GM12878 (cell line): ENCODE measurements at regions of chr7 and their contacts with region 1.

Region 1: DNA sequence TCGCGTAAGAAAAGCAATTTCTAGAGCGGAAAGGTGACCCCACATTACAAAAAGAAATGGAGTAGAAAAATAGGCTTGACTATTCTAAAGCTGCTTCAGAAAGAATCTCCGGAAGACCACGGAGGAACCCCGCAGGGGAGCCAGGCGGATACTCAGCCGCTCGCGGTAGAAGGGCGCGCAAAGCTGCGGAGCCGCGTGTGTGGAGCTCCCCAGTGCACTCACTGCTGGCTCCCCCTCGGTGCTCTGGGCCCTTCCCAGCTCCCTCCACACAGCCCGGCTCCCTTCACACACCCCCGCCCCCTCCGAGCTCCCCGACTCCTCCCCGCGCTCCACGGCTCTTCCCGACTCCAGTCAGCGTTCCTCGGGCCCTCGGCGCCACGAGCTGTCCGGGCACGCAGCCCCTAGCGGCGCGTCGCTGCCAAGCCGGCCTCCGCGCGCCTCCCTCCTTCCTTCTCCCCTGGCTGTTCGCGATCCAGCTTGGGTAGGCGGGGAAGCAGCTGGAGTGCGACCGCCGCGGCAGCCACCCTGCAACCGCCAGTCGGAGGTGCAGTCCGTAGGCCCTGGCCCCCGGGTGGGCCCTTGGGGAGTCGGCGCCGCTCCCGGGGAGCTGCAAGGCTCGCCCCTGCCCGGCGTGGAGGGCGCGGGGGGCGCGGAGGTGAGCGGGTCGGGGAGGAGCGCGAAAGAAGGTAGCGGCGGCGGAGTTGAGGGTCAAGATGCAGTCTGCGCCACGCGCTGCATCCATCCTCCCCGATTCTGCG is at the start of gene STEAP2:
- DNase-seq: no peak
- ATAC-seq: peak; percentile 91
- H3K4me3 ChIP-seq: no peak within 1 kb of the TSS
- H3K27ac ChIP-seq: no peak within 1 kb of the TSS
- H3K4me1 ChIP-seq: no peaks in the 10 kb centered on the region
- H3K27me3 ChIP-seq: peaks cover 1 to 17% of the 10 kb centered on the region in 2 experiments
- CTCF ChIP-seq: peak; percentile 32 to 61 (median 44)
- EP300 ChIP-seq: no peak
- POLR2A ChIP-seq: no peak
- RAD21 ChIP-seq: no peak
- polyA plus RNA-seq, gene STEAP2: 0.64 to 0.80 TPM

Region 2: DNA sequence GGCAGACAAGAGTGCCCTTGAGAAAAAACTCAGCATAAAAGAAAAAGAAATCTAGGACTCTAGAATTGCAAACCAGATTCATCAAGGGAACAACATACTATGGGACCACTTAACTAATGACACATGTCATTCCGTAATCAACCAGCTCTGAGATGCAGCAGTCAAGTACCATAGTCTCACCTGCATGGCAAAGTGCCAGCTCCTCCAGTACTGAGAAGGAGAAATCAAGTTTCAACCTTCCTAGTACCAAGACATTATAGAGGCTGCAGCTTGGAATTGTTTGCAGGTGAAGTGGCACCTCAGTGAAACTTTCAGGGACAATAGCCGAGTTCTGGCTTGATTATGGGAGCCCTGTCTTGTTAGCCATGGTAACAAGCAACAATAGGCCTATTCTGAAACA is 45.8 kb before region 1 on chr7:
- CTCF ChIA-PET with region 1: interaction called, 8 read pairs
- POLR2A ChIA-PET with region 1: interaction called, 4 read pairs
- RAD21 ChIA-PET with region 1: interaction called, 11 read pairs
- SMC1A ChIA-PET with region 1: interaction called, 4 read pairs
- in situ Hi-C with region 1: no loop called
- intact Hi-C with region 1: no loop called
- DNase-seq: no peak
- ATAC-seq: no peak
- H3K4me3 ChIP-seq: no peak overlapping the region
- H3K27ac ChIP-seq: no peak overlapping the region
- H3K4me1 ChIP-seq: no peaks in the 10 kb centered on the region
- H3K27me3 ChIP-seq: no peaks in the 10 kb centered on the region
- CTCF ChIP-seq: no peak
- EP300 ChIP-seq: no peak
- POLR2A ChIP-seq: no peak
- RAD21 ChIP-seq: no peak

Region 3: GRCh38 chr7:90178679-90179278 is 32.8 kb before region 1 on chr7:
- CTCF ChIA-PET with region 1: interaction called, 7 read pairs
- POLR2A ChIA-PET with region 1: interaction called, 8 read pairs
- RAD21 ChIA-PET with region 1: interaction called, 24 read pairs
- SMC1A ChIA-PET with region 1: interaction called, 26 read pairs
- in situ Hi-C with region 1: no loop called
- intact Hi-C with region 1: no loop called
- DNase-seq: peak; percentile 65
- ATAC-seq: peak; percentile 95
- H3K4me3 ChIP-seq: no peak overlapping the region
- H3K27ac ChIP-seq: peak overlapping the region; percentile 19
- H3K4me1 ChIP-seq: peaks cover 23% of the 10 kb centered on the region
- H3K27me3 ChIP-seq: no peaks in the 10 kb centered on the region
- CTCF ChIP-seq: no peak
- EP300 ChIP-seq: peak in 1 of 2 experiments; percentile 80; a peak in 1 of 4 replicates
- POLR2A ChIP-seq: no peak
- RAD21 ChIP-seq: no peak

Region 4: GRCh38 chr7:90194911-90195809 is 16.4 kb before region 1 on chr7:
- CTCF ChIA-PET with region 1: interaction called, 8 read pairs
- POLR2A ChIA-PET with region 1: interaction called, 7 read pairs
- RAD21 ChIA-PET with region 1: interaction called, 19 read pairs
- SMC1A ChIA-PET with region 1: interaction called, 29 read pairs
- in situ Hi-C with region 1: no loop called
- intact Hi-C with region 1: no loop called
- DNase-seq: no peak
- ATAC-seq: no peak
- H3K4me3 ChIP-seq: no peak overlapping the region
- H3K27ac ChIP-seq: no peak overlapping the region
- H3K4me1 ChIP-seq: no peaks in the 10 kb centered on the region
- H3K27me3 ChIP-seq: no peaks in the 10 kb centered on the region
- CTCF ChIP-seq: no peak
- EP300 ChIP-seq: no peak
- POLR2A ChIP-seq: no peak
- RAD21 ChIP-seq: no peak

Region 5: GRCh38 chr7:90236721-90237289 is 25.2 kb after region 1 on chr7:
- CTCF ChIA-PET with region 1: interaction called, 20 read pairs
- POLR2A ChIA-PET with region 1: interaction called, 92 read pairs
- RAD21 ChIA-PET with region 1: interaction called, 90 read pairs
- SMC1A ChIA-PET with region 1: interaction called, 116 read pairs
- in situ Hi-C with region 1: no loop called
- intact Hi-C with region 1: loop called (anchors 1 kb)
- DNase-seq: no peak
- ATAC-seq: no peak
- H3K4me3 ChIP-seq: no peak overlapping the region
- H3K27ac ChIP-seq: no peak overlapping the region
- H3K4me1 ChIP-seq: no peaks in the 10 kb centered on the region
- H3K27me3 ChIP-seq: no peaks in the 10 kb centered on the region
- CTCF ChIP-seq: no peak
- EP300 ChIP-seq: no peak
- POLR2A ChIP-seq: no peak
- RAD21 ChIP-seq: no peak

Region 6: DNA sequence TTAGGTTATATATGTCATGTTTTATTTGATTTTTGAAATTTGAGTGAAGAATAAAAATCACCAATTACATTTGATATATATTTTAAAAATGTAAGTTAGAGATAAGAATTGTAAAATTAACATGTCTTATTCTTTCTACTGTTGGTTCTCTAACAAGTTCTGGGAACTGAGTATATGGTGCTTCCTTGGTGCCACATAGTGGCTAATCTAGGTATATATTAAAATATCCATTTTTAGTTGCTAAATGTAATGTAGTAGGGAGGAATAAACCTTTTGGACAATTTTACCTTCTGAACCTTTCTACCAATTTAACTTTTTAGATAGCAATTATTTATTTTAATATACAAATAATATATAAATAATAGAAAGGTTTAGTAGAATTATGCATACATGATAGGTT is 50.9 kb after region 1 on chr7:
- CTCF ChIA-PET with region 1: interaction called, 15 read pairs
- POLR2A ChIA-PET with region 1: interaction called, 15 read pairs
- RAD21 ChIA-PET with region 1: interaction called, 10 read pairs
- SMC1A ChIA-PET with region 1: interaction called, 23 read pairs
- in situ Hi-C with region 1: no loop called
- intact Hi-C with region 1: no loop called
- DNase-seq: no peak
- ATAC-seq: peak; percentile 92
- H3K4me3 ChIP-seq: no peak overlapping the region
- H3K27ac ChIP-seq: no peak overlapping the region
- H3K4me1 ChIP-seq: no peaks in the 10 kb centered on the region
- H3K27me3 ChIP-seq: 0 out of 4 replicates have a peak, but pooled peaks cover 0 to under 1% of the 10 kb centered on the region in 2 experiments
- CTCF ChIP-seq: peak; percentile 28 to 68 (median 32); a peak in 4 of 6 replicates
- EP300 ChIP-seq: no peak
- POLR2A ChIP-seq: no peak
- RAD21 ChIP-seq: peak; percentile 82

Region 7: GRCh38 chr7:90488240-90488639 is 276.7 kb after region 1 on chr7:
- CTCF ChIA-PET with region 1: no interaction called
- POLR2A ChIA-PET with region 1: no interaction called
- RAD21 ChIA-PET with region 1: no interaction called
- SMC1A ChIA-PET with region 1: no interaction called
- in situ Hi-C with region 1: no loop called
- intact Hi-C with region 1: no loop called
- DNase-seq: no peak
- ATAC-seq: no peak
- H3K4me3 ChIP-seq: no peak overlapping the region
- H3K27ac ChIP-seq: no peak overlapping the region
- H3K4me1 ChIP-seq: no peaks in the 10 kb centered on the region
- H3K27me3 ChIP-seq: no peaks in the 10 kb centered on the region
- CTCF ChIP-seq: no peak
- EP300 ChIP-seq: no peak
- POLR2A ChIP-seq: no peak
- RAD21 ChIP-seq: no peak